Prostate gland (tissue), 2 donors: ENCODE measurements at regions of chr3 and their contacts with region 1.

Region 1: DNA sequence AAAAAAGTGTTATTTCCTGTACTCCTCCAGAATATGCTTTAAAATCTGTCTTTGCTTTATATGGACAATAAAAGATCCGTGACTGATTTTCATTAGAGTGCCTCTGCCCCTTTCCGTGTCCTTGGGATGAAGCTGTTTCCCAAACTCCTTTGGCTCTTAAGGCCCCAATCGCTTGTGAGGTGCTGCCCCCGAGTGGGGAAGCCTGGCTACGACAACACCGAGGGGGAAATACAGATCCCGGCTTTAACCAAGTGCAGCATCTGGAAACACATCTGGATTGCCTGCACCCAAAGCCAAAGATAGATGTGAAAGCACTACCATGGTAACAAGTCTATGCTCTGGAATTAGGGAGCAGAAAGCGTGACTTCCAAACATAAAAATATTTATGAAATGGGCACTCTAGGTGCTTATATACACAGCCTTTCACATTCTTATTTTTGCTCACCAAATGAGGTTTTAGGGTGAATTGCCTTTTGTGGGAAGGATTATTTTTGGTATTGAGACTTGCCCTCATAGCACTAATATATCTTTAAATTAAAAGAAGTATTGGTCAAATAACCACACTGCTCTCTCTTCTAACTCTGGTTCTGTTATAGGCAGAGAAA is 40.6 kb upstream of the ADCY5 start:
- DNase-seq: peak; percentile 31
- H3K4me3 ChIP-seq: no peak overlapping the region
- H3K27ac ChIP-seq: no peak overlapping the region
- H3K4me1 ChIP-seq: no peaks in the 10 kb centered on the region
- H3K27me3 ChIP-seq: no peaks in the 10 kb centered on the region
- CTCF ChIP-seq: peak; percentile 49 to 87 (median 75)
- POLR2A ChIP-seq: no peak

Region 2: DNA sequence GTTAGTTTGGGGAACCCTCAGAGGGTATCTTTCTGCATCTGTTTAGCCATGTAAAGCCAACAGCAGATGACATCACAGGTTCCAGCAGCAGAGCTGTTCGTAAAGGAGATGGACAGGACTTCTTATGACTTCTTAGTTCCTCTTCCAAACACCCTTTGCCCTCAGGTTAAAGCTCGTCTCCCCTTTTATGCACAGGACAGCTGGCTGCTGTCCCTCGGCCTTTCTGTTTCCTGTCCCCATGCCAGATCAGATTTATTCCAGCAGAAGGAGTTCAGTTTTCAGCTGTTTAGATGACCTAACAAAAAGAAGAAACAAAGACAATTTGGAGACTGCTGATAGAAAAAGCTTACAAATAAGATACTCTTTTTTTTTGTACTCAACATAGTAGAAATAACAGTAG is 242.6 kb before region 1 on chr3:
- intact Hi-C with region 1: no loop called
- DNase-seq: no peak
- H3K4me3 ChIP-seq: no peak overlapping the region
- H3K27ac ChIP-seq: peak overlapping the region in 1 of 2 donors; percentile 4
- H3K4me1 ChIP-seq: no peaks in the 10 kb centered on the region
- H3K27me3 ChIP-seq: no peaks in the 10 kb centered on the region
- CTCF ChIP-seq: no peak
- POLR2A ChIP-seq: no peak

Region 3: GRCh38 chr3:123286308-123287023 is 203.0 kb before region 1 on chr3:
- intact Hi-C with region 1: loop called (anchors 5 kb)
- DNase-seq: no peak
- H3K4me3 ChIP-seq: no peak overlapping the region
- H3K27ac ChIP-seq: no peak overlapping the region
- H3K4me1 ChIP-seq: no peaks in the 10 kb centered on the region
- H3K27me3 ChIP-seq: no peaks in the 10 kb centered on the region
- CTCF ChIP-seq: peak in 3 of 4 experiments; percentile 9 to 34 (median 22)
- POLR2A ChIP-seq: no peak

Region 4: DNA sequence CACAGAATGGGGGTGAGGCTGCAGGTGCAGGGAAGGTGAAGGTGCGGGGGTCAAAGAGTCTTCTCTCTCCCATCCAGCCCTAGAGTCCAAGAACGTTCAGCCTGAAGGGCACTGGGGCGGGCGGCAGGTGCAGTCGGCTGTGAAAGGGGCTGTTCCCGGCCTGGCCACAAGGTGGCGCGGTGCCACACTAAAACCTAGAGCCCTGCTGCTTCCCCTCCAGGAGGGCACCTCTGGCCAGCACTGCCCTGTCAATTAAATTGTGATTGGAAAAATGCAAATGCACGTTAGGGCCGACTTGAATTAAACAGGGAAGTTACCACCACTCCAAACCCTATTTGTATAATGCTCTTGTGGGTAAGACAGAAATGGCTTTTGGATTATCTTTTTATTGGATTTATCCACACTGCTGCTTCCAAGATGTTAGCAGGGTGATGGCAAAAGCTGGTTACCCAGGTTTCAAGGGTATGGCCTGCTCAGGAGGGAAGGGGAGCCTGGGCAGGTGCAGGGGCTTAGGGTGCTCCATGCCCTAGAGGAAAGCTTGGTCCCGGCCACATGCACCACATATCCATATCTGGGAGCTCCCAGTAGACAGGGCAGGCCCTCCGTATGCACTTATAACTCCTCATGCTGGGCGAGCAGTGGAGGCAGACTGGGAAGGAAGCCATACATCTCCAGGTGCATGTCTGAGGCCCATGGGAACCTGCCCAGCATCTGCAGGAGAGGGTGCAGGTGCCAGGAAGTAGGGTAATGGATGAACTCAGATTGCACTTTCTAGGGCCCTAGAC is 160.5 kb before region 1 on chr3:
- intact Hi-C with region 1: loop called (anchors 1 kb)
- DNase-seq: peak; percentile 66
- H3K4me3 ChIP-seq: no peak overlapping the region
- H3K27ac ChIP-seq: peak overlapping the region in 1 of 2 donors; percentile 69
- H3K4me1 ChIP-seq: no peaks in the 10 kb centered on the region
- H3K27me3 ChIP-seq: no peaks in the 10 kb centered on the region
- CTCF ChIP-seq: peak; percentile 93 to 99 (median 95)
- POLR2A ChIP-seq: no peak

Region 5: GRCh38 chr3:123552095-123552714 is 62.7 kb after region 1 on chr3:
- intact Hi-C with region 1: loop called (anchors 5 kb)
- DNase-seq: no peak
- H3K4me3 ChIP-seq: no peak overlapping the region
- H3K27ac ChIP-seq: no peak overlapping the region
- H3K4me1 ChIP-seq: no peaks in the 10 kb centered on the region
- H3K27me3 ChIP-seq: no peaks in the 10 kb centered on the region
- CTCF ChIP-seq: peak in 2 of 4 experiments; percentile 3 to 35
- POLR2A ChIP-seq: no peak

Region 6: DNA sequence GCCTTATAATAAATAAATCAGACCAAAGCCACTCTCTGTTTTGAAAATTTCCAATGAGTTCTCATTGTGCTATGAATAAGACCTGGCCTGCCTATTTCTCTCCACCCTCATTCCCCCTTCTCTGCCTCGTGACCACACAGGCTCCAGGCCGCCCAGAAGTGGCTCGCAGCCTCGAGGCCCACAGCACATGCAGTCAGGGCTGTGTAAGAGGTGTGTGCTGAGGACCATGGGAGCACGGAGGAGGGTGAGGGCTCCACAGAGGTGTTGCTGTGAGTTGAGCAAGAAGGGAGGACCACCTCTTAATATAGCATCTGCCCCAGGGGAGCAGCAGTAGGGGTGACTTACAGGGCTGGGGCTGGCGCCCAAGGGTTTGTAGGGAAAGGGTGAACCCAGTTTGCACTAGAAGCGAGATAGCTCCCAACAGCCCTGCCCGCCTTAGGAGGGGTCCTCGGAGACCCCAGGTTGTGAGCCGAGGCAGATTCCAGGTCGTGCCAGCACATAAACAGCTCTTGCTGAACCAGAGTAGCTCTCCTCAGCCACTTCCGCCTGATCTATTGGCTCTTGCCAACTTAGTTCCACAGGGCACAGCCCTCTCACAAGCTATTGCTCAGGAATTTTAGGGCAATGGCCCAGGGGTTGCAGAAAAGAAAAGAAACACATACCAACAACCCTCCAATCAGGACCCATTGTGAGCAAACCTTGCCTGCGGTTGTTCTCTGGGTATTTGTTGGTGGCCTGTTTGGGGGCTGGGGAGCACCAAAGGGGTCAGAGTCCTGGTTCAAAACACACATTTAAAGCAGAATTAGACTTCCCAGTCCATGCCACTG is 276.9 kb after region 1 on chr3:
- intact Hi-C with region 1: no loop called
- DNase-seq: peak; percentile 59
- H3K4me3 ChIP-seq: no peak overlapping the region
- H3K27ac ChIP-seq: peak overlapping the region; percentile 65 to 66
- H3K4me1 ChIP-seq: peaks cover 8% of the 10 kb centered on the region
- H3K27me3 ChIP-seq: no peaks in the 10 kb centered on the region
- CTCF ChIP-seq: no peak
- POLR2A ChIP-seq: no peak